ENCODE measurements at regions of chr1 and their contacts with region 1.

Region 1: GRCh38 chr1:93345633-93346420 is at the start of gene DR1:
- DNase-seq: peak; percentile 81 to 94 (median 90)
- ATAC-seq: peak; percentile 74
- H3K4me3 ChIP-seq: peak within 1 kb of the TSS; percentile 80 to 81
- H3K4me3 Mint-ChIP-seq: peak within 1 kb of the TSS; percentile 95
- H3K27ac ChIP-seq: peak within 1 kb of the TSS; percentile 72 to 91
- H3K27ac Mint-ChIP-seq: peak within 1 kb of the TSS; percentile 98
- H3K4me1 ChIP-seq: peaks cover 32% of the 10 kb centered on the region
- H3K4me1 Mint-ChIP-seq: peaks cover 51% of the 10 kb centered on the region
- H3K27me3 ChIP-seq: no peaks in the 10 kb centered on the region
- H3K27me3 Mint-ChIP-seq: no peaks in the 10 kb centered on the region
- CTCF ChIP-seq: no peak
- total RNA-seq, gene DR1: 49.1 to 49.9 TPM

Region 2: GRCh38 chr1:92080128-92080985 is 1265.5 kb before region 1 on chr1 and contains the start of gene BTBD8:
- CTCF ChIA-PET with region 1: no interaction called
- POLR2A ChIA-PET with region 1: no interaction called
- intact Hi-C with region 1: no loop called
- DNase-seq: peak; percentile 75 to 91 (median 88)
- ATAC-seq: peak; percentile 97
- H3K4me3 ChIP-seq: peak within 1 kb of the TSS; percentile 82 to 88
- H3K4me3 Mint-ChIP-seq: peak within 1 kb of the TSS; percentile 95
- H3K27ac ChIP-seq: peak within 1 kb of the TSS; percentile 60 to 71
- H3K27ac Mint-ChIP-seq: peak within 1 kb of the TSS; percentile 93
- H3K4me1 ChIP-seq: peaks cover 5% of the 10 kb centered on the region
- H3K4me1 Mint-ChIP-seq: peaks cover 13% of the 10 kb centered on the region
- H3K27me3 ChIP-seq: no peaks in the 10 kb centered on the region
- H3K27me3 Mint-ChIP-seq: no peaks in the 10 kb centered on the region
- CTCF ChIP-seq: no peak
- total RNA-seq, gene BTBD8: 0.72 to 1.2 TPM

Region 3: DNA sequence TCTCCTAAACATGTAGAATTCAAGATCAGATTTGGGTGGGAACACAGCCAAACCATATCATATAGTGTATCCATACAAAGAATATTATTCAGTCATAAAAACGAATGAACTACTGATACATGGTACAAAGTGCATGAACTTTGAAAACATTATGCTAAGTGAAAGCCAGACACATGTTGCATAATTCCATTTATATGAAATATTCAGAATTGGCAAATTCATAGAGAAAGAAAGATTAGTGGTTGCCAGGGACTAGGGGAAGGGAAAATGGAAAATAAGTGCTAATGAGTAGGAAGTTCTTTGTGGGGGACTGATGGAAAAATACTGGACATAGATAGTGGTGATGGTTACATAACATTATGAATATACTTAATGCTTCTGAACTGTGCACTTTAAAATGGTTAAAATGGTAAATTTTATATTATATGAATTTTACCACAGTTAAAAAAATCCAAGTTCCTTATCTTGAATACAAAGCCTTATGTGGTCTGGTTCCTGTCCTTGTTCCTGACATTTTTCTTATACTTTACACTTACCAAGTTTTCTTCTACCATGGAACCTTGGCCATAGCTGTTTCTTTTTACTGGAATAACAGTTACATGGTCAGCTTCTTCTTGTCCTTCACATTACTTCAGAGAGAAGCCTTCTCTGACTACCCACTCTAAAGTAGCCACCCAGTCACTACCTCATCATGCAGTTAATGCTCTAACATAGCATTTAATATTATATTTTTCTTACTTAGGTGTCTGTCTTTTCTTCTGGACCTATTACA is 101.3 kb before region 1 on chr1:
- CTCF ChIA-PET with region 1: no interaction called
- POLR2A ChIA-PET with region 1: no interaction called
- intact Hi-C with region 1: no loop called
- DNase-seq: no peak
- ATAC-seq: no peak
- H3K4me3 ChIP-seq: no peak overlapping the region
- H3K4me3 Mint-ChIP-seq: no peak overlapping the region
- H3K27ac ChIP-seq: no peak overlapping the region
- H3K27ac Mint-ChIP-seq: no peak overlapping the region
- H3K4me1 ChIP-seq: no peaks in the 10 kb centered on the region
- H3K4me1 Mint-ChIP-seq: no peaks in the 10 kb centered on the region
- H3K27me3 ChIP-seq: no peaks in the 10 kb centered on the region
- H3K27me3 Mint-ChIP-seq: no peaks in the 10 kb centered on the region
- CTCF ChIP-seq: no peak

Region 4: DNA sequence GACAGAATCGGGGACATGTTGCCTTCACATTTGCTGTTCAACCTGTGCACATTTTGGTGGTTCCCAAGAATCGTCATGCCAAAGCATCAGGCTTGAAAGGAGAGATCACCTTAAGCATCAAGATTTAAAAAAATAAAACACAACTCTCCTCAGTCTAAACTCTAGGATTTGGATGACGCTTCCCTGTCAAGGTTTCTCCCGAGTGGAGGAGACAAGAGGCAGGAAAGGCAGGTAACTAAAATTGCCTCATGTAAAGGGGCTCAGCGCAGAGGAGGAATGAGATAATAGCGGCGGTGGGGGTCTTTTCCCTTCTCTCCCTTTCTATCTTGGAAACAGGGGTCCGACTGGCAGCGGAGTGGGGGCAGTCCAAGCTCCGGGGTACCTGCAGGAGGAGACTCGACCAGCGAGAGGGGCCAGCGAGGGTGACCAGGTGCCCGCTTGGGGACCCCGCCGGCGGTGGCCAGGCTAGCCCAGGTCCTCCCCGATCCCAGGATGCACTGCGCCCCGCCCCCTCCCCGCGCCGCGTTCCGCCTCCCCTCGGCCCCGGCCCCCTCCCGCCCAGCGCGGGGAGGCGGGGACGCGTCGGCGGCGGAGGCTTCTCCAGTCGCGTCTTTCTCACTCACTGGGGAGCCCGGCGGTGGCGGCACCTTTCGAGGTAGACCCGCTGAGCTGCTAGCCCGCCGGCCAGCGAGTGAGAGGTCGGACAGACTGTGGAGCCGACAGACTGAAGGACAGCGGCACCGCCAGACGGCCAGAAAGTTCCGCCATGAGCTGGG is 101.9 kb after region 1 on chr1 and contains the start of gene FNBP1L:
- CTCF ChIA-PET with region 1: no interaction called
- POLR2A ChIA-PET with region 1: interaction called, 3 read pairs
- intact Hi-C with region 1: loop called in 1 of 2 experiments (anchors 5 kb)
- DNase-seq: peak in 8 of 9 experiments; percentile 34 to 69 (median 51)
- ATAC-seq: peak; percentile 74
- H3K4me3 ChIP-seq: peak within 1 kb of the TSS; percentile 53 to 66
- H3K4me3 Mint-ChIP-seq: peak within 1 kb of the TSS; percentile 91
- H3K27ac ChIP-seq: no peak within 1 kb of the TSS
- H3K27ac Mint-ChIP-seq: no peak within 1 kb of the TSS
- H3K4me1 ChIP-seq: peaks cover 20% of the 10 kb centered on the region
- H3K4me1 Mint-ChIP-seq: peaks cover 17% of the 10 kb centered on the region
- H3K27me3 ChIP-seq: peaks cover 18 to 28% of the 10 kb centered on the region in 2 experiments
- H3K27me3 Mint-ChIP-seq: peaks cover 47% of the 10 kb centered on the region
- CTCF ChIP-seq: no peak
- total RNA-seq, gene FNBP1L: 0.31 to 0.35 TPM

Region 5: DNA sequence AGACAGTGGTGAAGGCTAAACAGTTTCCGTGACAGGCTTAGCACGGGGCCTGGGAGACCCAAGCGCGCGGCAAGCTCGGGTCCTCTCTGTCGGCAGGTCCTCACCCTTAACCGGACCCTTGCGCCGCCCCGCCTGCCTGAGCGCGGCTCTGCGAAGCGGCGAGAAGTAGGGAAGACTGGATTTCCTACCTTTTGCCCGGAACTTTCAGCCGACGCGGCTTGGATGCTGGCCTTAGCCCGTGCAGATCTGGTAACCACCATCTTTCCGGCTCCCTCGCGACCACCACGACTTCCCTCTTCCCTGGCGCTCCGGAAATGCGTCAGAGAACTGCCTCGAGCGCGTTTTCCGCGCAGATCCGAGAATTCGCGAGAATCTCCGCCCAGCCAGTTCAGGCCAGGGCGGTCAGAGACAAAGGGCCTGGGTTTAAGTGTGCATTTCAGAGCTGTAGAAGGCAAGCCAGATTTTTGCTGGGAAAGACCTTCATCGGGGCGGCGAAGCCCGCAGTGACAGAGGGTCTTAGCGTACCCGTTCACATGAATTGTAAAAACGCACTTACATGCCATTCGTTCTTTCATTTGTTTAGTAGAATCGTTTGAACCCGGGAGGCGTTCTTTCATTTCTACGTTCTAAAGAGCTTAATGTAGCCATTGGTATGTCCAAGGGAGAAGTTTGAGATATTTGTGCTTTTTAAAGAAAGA is 533.2 kb after region 1 on chr1 and contains the start of gene DNTTIP2:
- CTCF ChIA-PET with region 1: no interaction called
- POLR2A ChIA-PET with region 1: interaction called, 7 read pairs
- intact Hi-C with region 1: loop called in 1 of 2 experiments (anchors 1 kb)
- DNase-seq: peak; percentile 74 to 95 (median 88)
- ATAC-seq: peak; percentile 81
- H3K4me3 ChIP-seq: peak within 1 kb of the TSS; percentile 87 to 99
- H3K4me3 Mint-ChIP-seq: peak within 1 kb of the TSS; percentile 95
- H3K27ac ChIP-seq: peak within 1 kb of the TSS; percentile 95 to 99
- H3K27ac Mint-ChIP-seq: peak within 1 kb of the TSS; percentile 98
- H3K4me1 ChIP-seq: peaks cover 32% of the 10 kb centered on the region
- H3K4me1 Mint-ChIP-seq: peaks cover 46% of the 10 kb centered on the region
- H3K27me3 ChIP-seq: no peaks in the 10 kb centered on the region
- H3K27me3 Mint-ChIP-seq: no peaks in the 10 kb centered on the region
- CTCF ChIP-seq: no peak
- total RNA-seq, gene DNTTIP2: 126 to 130 TPM

Region 6: DNA sequence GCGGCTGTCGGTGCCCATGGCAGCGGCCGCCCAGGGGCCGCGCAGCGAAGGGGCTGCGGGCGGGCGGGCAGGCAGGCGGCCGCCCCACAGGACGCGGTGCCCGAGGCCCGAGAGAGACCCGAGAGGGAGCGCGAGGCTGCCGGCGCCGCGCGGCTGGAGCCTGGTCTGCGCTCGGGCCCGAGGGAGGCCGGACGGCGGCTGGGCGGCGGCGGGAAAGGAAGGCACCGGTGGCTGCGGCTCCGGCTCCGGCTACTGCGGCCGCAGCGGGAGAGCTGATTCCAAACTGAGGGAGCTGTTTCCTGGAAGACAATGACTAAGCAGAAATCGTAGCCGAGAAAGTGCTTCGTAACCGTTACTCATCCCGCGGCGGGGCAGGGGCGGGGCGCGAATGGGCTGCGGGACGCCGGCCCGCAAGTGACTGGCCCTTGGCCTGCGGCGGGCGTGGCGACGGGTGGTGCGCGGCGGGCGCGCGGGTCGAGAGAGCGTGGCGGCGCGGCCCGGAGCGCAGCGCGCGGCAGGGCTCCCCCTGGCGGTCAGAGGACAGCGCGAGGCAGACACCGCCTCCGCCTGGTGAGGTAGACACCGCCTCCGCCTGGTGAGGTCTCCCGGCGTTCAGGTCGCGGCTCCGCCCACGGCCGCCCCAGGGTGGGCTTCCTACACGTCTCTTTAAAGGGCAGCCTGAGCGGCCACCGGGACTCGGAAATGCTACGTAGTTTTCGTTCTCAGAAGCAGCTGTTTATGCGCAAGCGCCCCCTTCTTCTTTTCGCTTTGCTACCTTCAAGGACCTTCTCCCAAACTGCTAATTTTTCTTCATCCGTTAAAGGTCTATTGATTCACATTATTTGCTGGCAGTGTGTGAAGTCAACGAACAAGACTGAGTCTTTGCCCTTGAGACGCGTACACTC is 563.6 kb after region 1 on chr1 and contains the start of gene GCLM:
- CTCF ChIA-PET with region 1: no interaction called
- POLR2A ChIA-PET with region 1: no interaction called
- intact Hi-C with region 1: loop called (anchors 1 to 5 kb)
- DNase-seq: peak; percentile 76 to 95 (median 91)
- ATAC-seq: peak; percentile 89
- H3K4me3 ChIP-seq: peak within 1 kb of the TSS; percentile 62 to 67
- H3K4me3 Mint-ChIP-seq: peak within 1 kb of the TSS; percentile 88
- H3K27ac ChIP-seq: peak within 1 kb of the TSS; percentile 72 to 76
- H3K27ac Mint-ChIP-seq: peak within 1 kb of the TSS; percentile 92
- H3K4me1 ChIP-seq: peaks cover 12% of the 10 kb centered on the region
- H3K4me1 Mint-ChIP-seq: peaks cover 37% of the 10 kb centered on the region
- H3K27me3 ChIP-seq: no peaks in the 10 kb centered on the region
- H3K27me3 Mint-ChIP-seq: no peaks in the 10 kb centered on the region
- CTCF ChIP-seq: peak; percentile 86
- total RNA-seq, gene GCLM: 6.4 to 6.8 TPM

Region 7: DNA sequence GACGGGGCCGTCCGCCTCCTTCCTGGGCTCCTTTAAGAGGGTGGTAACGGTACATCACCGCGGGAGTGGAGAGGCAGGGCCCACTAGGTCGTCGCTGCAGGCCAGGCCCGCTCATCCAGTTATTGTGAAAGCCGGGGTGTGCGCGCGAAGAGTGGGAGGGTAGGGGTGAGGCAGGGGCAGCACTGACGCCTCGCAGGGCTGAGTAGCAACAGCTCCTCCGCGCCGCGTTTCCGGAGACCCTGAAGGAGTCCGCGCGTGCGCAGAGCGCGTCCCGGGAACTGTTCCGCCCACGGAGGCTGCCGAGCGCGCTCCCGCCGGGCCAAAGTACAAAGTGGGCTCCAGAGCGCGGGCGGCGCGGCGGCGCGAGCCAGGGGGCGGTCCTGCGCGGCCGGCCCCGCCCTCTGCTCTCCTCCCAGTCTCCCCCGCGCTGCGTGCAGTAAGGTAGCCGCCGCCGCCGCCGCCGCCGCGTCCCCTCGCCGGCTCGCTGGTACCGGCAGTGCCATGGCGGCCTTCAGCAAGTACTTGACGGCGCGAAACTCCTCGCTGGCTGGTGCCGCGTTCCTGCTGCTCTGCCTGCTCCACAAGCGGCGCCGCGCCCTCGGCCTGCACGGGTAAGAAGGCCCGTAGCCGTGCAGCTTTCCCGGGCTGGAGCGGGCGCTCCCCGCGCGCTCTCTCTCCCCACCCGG is 1072.3 kb after region 1 on chr1 and contains the start of gene ABCD3:
- CTCF ChIA-PET with region 1: no interaction called
- POLR2A ChIA-PET with region 1: no interaction called
- intact Hi-C with region 1: loop called (anchors 2 to 5 kb)
- DNase-seq: peak; percentile 93 to 99 (median 97)
- ATAC-seq: peak; percentile 91
- H3K4me3 ChIP-seq: peak within 1 kb of the TSS; percentile 63 to 81
- H3K4me3 Mint-ChIP-seq: no peak within 1 kb of the TSS
- H3K27ac ChIP-seq: peak within 1 kb of the TSS; percentile 67 to 85
- H3K27ac Mint-ChIP-seq: peak within 1 kb of the TSS; percentile 85
- H3K4me1 ChIP-seq: peaks cover 27% of the 10 kb centered on the region
- H3K4me1 Mint-ChIP-seq: peaks cover 42% of the 10 kb centered on the region
- H3K27me3 ChIP-seq: no peaks in the 10 kb centered on the region
- H3K27me3 Mint-ChIP-seq: peaks cover 2% of the 10 kb centered on the region
- CTCF ChIP-seq: no peak
- total RNA-seq, gene ABCD3: 17.9 to 18.1 TPM

Measured in CD8-positive, alpha-beta T cell (primary cell).